OCI-LY7 (cell line): ENCODE measurements at regions of chr2 and their contacts with region 1.

Region 1: DNA sequence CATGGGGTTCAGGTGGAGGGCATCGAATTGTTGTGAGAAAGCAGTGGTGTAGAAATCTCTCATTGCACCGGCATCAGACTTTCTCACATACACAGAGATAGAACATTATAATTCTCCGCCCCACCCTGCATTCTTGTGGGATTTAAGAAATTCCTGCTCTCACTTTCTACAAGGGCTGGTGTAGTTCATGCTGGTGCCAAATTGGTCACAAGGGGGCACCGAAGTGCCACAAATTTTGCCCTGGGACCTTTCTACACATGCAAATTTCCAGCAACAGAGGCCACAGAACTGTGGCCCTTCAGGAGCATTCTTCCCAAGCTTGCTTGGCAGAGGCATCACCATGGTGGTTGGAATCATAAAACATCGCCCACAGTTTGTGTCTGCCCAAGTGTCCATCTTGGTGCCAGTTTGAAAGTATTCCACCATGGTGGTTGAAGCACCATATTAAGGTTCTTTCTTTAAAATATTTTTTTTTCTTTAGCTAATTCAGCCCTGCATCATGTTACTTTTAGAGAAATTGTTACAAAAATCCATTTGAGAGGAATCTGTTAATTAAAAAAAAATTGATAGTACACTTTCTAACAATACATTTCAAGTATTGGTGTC is 521.2 kb upstream of the FANCL start:
- DNase-seq: peak; percentile 28
- H3K4me3 ChIP-seq: no peak overlapping the region
- H3K27ac ChIP-seq: no peak overlapping the region
- H3K4me1 ChIP-seq: no peaks in the 10 kb centered on the region
- CTCF ChIP-seq: peak; percentile 77

Region 2: DNA sequence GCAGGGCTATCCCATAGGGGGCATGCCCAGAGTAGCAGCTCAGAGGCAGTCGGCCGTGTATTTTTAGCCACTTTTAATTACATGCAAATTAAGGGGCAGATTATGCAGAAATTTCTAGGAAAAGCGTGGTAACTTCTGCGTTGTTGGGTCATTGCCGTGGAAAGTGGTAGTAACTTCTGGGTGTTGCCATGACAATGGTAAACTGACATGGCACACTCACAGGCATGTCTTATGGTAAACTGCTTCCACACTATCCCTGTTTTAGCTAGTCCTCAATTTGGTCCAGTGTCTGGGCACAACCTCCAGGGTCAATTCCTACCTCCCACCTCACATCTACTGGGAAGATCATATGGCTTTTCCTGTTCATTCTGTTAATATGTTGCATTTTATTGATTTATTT is 92.3 kb before region 1 on chr2:
- CTCF ChIA-PET with region 1: no interaction called
- POLR2A ChIA-PET with region 1: no interaction called
- intact Hi-C with region 1: no loop called
- DNase-seq: no peak
- H3K4me3 ChIP-seq: no peak overlapping the region
- H3K27ac ChIP-seq: no peak overlapping the region
- H3K4me1 ChIP-seq: no peaks in the 10 kb centered on the region
- CTCF ChIP-seq: no peak

Region 3: DNA sequence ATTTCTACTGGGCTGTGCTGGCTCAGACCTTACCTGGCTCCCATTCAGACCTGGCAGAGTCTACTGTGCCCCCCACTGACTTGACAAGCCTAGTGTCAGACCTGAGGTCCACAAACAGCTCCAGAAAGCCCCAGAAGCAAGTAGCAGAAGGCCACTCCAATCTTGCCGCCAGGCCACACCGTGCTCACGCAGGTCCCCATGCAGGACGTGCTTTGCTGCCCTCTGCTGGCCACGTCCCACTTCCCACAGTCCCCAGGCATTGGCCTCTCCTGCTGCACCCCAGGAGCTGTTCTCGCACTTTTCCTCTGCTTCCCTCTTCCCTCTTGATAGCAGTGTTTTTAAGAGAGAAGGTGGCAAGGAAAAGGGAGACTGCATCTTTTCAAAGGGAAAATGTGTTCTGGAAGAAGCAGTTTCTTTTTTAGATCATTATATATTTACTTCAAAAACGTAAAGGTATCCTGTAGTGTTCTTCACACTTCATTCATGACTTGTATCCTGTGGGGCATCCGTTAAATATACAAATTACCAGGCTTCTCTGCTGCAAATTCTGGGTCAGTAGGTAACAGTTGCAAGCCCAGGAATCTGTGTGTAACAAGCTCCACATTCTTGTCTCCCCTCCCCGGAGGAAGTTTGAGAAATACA is 1912.4 kb after region 1 on chr2:
- CTCF ChIA-PET with region 1: no interaction called
- POLR2A ChIA-PET with region 1: no interaction called
- intact Hi-C with region 1: loop called (anchors 5 kb)
- DNase-seq: peak; percentile 82
- H3K4me3 ChIP-seq: no peak overlapping the region
- H3K27ac ChIP-seq: no peak overlapping the region
- H3K4me1 ChIP-seq: no peaks in the 10 kb centered on the region
- CTCF ChIP-seq: peak; percentile 96